ENCODE measurements at regions of chr9 and their contacts with region 1.

Region 1: DNA sequence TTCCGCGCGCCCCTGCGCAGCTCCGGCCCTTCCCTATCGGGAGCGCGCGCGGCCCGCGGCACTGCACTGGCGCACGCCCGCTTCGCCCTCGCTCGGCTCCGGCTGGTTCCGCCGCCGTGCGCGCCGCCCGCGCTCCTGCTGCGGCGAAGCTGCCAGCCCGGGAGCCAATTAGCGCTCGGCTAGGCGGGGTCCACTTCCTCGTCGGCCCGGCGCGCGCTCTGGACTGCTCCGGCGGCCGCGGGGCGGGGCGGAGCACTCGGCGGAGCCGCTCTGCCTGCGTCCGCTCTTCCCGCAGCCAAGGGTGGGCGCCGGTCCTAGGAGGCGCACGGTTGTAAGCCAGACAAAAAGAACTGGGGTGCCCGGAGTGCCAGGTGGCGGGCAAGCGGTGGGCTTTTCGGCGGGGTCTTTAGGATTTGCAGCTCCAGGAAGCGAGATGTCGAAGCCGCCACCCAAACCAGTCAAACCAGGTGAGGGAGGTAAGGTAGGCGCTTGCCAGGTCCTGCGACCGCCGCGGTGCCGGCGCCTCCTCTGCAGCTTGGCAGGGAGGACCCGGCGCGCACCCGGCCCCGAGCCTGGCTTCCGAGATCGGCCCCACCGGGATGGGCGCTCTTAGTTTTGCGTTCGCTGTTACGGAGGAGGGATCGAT is at the start of gene OSTF1:
- DNase-seq: peak; percentile 98
- ATAC-seq: peak; percentile 97
- H3K4me3 ChIP-seq: peak within 1 kb of the TSS; percentile 89 to 90
- H3K27ac ChIP-seq: peak within 1 kb of the TSS in 1 of 2 donors; percentile 66
- H3K4me1 ChIP-seq: peaks cover 0 to 2% of the 10 kb centered on the region in 2 donors
- H3K27me3 ChIP-seq: no peaks in the 10 kb centered on the region
- total RNA-seq, gene OSTF1: 34.6 to 47.7 TPM

Region 2: GRCh38 chr9:74952281-74953151 is 135.9 kb before region 1 on chr9 and contains the start of gene C9orf40:
- intact Hi-C with region 1: loop called (anchors 5 kb)
- DNase-seq: peak; percentile 94 to 98
- ATAC-seq: peak; percentile 99
- H3K4me3 ChIP-seq: peak within 1 kb of the TSS; percentile 32 to 82
- H3K27ac ChIP-seq: peak within 1 kb of the TSS; percentile 51 to 90
- H3K4me1 ChIP-seq: no peaks in the 10 kb centered on the region
- H3K27me3 ChIP-seq: no peaks in the 10 kb centered on the region
- total RNA-seq, gene C9orf40: 3.8 to 5.8 TPM

Region 3: GRCh38 chr9:75017378-75017777 is 71.0 kb before region 1 on chr9:
- intact Hi-C with region 1: no loop called
- DNase-seq: no peak
- ATAC-seq: no peak
- H3K4me3 ChIP-seq: no peak overlapping the region
- H3K27ac ChIP-seq: no peak overlapping the region
- H3K4me1 ChIP-seq: no peaks in the 10 kb centered on the region
- H3K27me3 ChIP-seq: no peaks in the 10 kb centered on the region

Region 4: GRCh38 chr9:75027187-75028107 is 60.9 kb before region 1 on chr9:
- intact Hi-C with region 1: loop called (anchors 5 kb)
- DNase-seq: peak; percentile 76 to 87
- ATAC-seq: peak; percentile 80
- H3K4me3 ChIP-seq: peak overlapping the region; percentile 58 to 62
- H3K27ac ChIP-seq: peak overlapping the region in 1 of 2 donors; percentile 68
- H3K4me1 ChIP-seq: peaks cover 2% of the 10 kb centered on the region in 2 donors
- H3K27me3 ChIP-seq: no peaks in the 10 kb centered on the region

Region 5: GRCh38 chr9:75147638-75148037 is 59.3 kb after region 1 on chr9:
- intact Hi-C with region 1: loop called in 1 of 2 experiments (anchors 2 kb)
- DNase-seq: no peak
- ATAC-seq: no peak
- H3K4me3 ChIP-seq: no peak overlapping the region
- H3K27ac ChIP-seq: no peak overlapping the region
- H3K4me1 ChIP-seq: peaks cover 0 to 4% of the 10 kb centered on the region in 2 donors
- H3K27me3 ChIP-seq: no peaks in the 10 kb centered on the region

Region 6: GRCh38 chr9:75229605-75230332 is 141.4 kb after region 1 on chr9:
- intact Hi-C with region 1: no loop called
- DNase-seq: peak; percentile 81 to 83
- ATAC-seq: peak; percentile 88
- H3K4me3 ChIP-seq: no peak overlapping the region
- H3K27ac ChIP-seq: peak overlapping the region; percentile 91 to 99
- H3K4me1 ChIP-seq: peaks cover 9 to 10% of the 10 kb centered on the region in 2 donors
- H3K27me3 ChIP-seq: no peaks in the 10 kb centered on the region

Measured in aorta (tissue), 5 donors.